Kidney (tissue), 22 donors: ENCODE measurements at regions of chr2 and their contacts with region 1.

Region 1: GRCh38 chr2:165401285-165401852 is 68.1 kb upstream of the CSRNP3 start:
- DNase-seq: peak in 2 of 5 donors; percentile 89
- H3K4me3 ChIP-seq: no peak overlapping the region
- H3K27ac ChIP-seq: no peak overlapping the region
- H3K4me1 ChIP-seq: no peaks in the 10 kb centered on the region
- H3K27me3 ChIP-seq: no peaks in the 10 kb centered on the region
- CTCF ChIP-seq: peak; percentile 69

Region 2: GRCh38 chr2:165161510-165161909 is 239.9 kb before region 1 on chr2:
- intact Hi-C with region 1: no loop called
- DNase-seq: no peak
- H3K4me3 ChIP-seq: no peak overlapping the region
- H3K27ac ChIP-seq: no peak overlapping the region
- H3K4me1 ChIP-seq: no peaks in the 10 kb centered on the region
- H3K27me3 ChIP-seq: no peaks in the 10 kb centered on the region
- CTCF ChIP-seq: no peak

Region 3: DNA sequence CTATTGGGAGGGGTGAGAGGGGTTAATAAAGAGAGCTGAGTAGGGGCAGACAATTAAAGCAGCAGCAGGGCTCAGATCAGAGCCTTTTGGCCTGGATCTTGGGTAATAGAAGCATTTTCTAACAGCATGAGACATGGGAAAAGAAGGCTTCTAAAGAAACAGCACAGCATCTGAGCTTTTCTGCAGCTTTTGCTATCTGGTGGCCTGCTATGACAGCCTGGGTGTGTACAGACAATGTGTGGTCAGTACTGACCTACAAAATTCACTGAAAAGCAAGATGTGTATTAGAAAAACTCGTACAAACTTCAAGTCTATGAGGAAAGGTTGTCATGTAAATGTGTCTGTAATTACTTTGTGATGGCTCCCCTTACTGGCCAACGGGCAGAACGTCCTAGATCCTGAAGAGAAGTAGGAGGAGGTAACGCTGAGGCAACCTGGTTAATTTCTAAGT is 297.1 kb after region 1 on chr2:
- intact Hi-C with region 1: loop called (anchors 10 kb)
- DNase-seq: peak in 4 of 5 donors; percentile 43 to 78 (median 54)
- H3K4me3 ChIP-seq: no peak overlapping the region
- H3K27ac ChIP-seq: no peak overlapping the region
- H3K4me1 ChIP-seq: peaks cover 0 to 2% (median 0%) of the 10 kb centered on the region in 3 donors
- H3K27me3 ChIP-seq: no peaks in the 10 kb centered on the region
- CTCF ChIP-seq: peak; percentile 55